PC-3 (cell line): ENCODE measurements at regions of chr4 and their contacts with region 1.

Region 1: DNA sequence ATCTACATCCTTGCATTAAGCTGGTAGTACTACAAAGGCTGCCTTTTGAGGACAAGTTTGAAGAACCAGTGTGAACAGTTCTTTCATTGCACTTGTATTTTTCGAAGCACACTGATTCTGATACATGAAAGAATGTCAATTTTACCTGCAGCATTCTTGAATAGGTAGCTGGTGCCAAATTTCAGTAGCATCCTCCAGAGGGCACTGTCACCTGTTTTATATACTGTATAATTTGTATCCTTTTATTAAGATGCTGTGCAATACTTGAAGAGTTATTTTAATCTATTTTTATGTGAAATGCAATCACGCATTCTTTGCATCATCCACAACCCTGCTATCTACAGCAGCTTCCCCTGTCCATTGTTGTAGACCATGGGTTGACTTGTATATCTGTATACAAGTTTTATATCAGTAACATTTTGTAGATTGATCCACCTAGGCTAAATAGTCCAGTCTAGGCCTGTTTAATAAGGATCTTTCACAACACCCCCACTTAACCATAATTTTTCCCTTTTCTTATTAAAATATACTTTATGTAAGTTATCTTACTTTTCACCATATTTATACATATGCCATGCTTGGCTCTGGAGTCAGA is 325.7 kb downstream of the PCDH7 start:
- DNase-seq: peak; percentile 65
- ATAC-seq: peak; percentile 67
- H3K4me3 ChIP-seq: no peak overlapping the region
- H3K27ac ChIP-seq: no peak overlapping the region
- H3K4me1 ChIP-seq: peaks cover 8% of the 10 kb centered on the region; the same call in 1 of the 2 replicates
- H3K27me3 ChIP-seq: no peaks in the 10 kb centered on the region
- CTCF ChIP-seq: peak; percentile 72

Region 2: GRCh38 chr4:30396772-30397475 is 648.9 kb before region 1 on chr4:
- CTCF ChIA-PET with region 1: no interaction called
- POLR2A ChIA-PET with region 1: no interaction called
- intact Hi-C with region 1: no loop called
- DNase-seq: peak; percentile 41
- ATAC-seq: peak; percentile 18; the same call in 1 of the 2 replicates
- H3K4me3 ChIP-seq: no peak overlapping the region
- H3K27ac ChIP-seq: no peak overlapping the region
- H3K4me1 ChIP-seq: peaks cover 11% of the 10 kb centered on the region; the same call in 1 of the 2 replicates
- H3K27me3 ChIP-seq: no peaks in the 10 kb centered on the region
- CTCF ChIP-seq: no peak

Region 3: DNA sequence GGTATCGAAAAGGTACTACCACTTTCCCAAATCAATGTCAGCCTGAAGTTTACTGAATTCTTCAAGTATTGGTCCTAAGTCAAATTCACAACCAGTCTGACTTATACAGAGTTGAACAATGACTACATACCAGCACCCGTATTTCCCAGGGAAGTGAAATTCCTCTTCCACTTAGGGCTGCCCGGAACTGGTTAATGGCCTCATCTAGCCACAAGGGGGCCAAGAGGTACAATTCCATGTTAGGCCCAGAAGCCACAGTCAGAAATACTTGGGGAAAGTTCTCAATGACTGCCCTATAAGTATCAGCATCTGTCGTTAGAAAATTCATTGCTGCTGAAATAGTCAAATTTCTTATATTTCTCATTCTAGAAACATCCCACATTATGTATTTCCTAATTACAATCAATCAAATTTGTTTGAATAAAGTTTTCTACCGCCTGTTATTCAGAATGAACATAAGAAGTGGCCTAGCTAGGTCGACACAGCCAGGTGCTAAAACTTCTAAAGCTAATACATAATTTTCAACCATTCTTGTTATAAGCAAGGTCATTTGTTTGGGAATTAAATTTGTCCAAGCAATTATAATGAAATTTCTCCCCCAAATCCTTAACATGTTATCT is 331.3 kb before region 1 on chr4:
- CTCF ChIA-PET with region 1: no interaction called
- POLR2A ChIA-PET with region 1: no interaction called
- intact Hi-C with region 1: loop called (anchors 2 kb)
- DNase-seq: peak; percentile 65
- ATAC-seq: no peak
- H3K4me3 ChIP-seq: no peak overlapping the region
- H3K27ac ChIP-seq: no peak overlapping the region
- H3K4me1 ChIP-seq: peaks cover 5% of the 10 kb centered on the region; the same call in 1 of the 2 replicates
- H3K27me3 ChIP-seq: no peaks in the 10 kb centered on the region
- CTCF ChIP-seq: peak; percentile 76

Region 4: GRCh38 chr4:31078661-31079060 is 32.8 kb after region 1 on chr4:
- CTCF ChIA-PET with region 1: no interaction called
- POLR2A ChIA-PET with region 1: no interaction called
- intact Hi-C with region 1: no loop called
- DNase-seq: no peak
- ATAC-seq: no peak
- H3K4me3 ChIP-seq: no peak overlapping the region
- H3K27ac ChIP-seq: no peak overlapping the region
- H3K4me1 ChIP-seq: peaks cover 4% of the 10 kb centered on the region; the same call in 1 of the 2 replicates
- H3K27me3 ChIP-seq: no peaks in the 10 kb centered on the region
- CTCF ChIP-seq: no peak

Region 5: GRCh38 chr4:31089815-31090214 is 44.0 kb after region 1 on chr4:
- CTCF ChIA-PET with region 1: no interaction called
- POLR2A ChIA-PET with region 1: no interaction called
- intact Hi-C with region 1: loop called (anchors 2 kb)
- DNase-seq: peak; percentile 94
- ATAC-seq: peak; percentile 84
- H3K4me3 ChIP-seq: peak overlapping the region; percentile 45; the same call in 1 of the 2 replicates
- H3K27ac ChIP-seq: peak overlapping the region; percentile 89
- H3K4me1 ChIP-seq: peaks cover 33% of the 10 kb centered on the region
- H3K27me3 ChIP-seq: no peaks in the 10 kb centered on the region
- CTCF ChIP-seq: no peak

Region 6: GRCh38 chr4:31169851-31170250 is 124.0 kb after region 1 on chr4:
- CTCF ChIA-PET with region 1: no interaction called
- POLR2A ChIA-PET with region 1: no interaction called
- intact Hi-C with region 1: no loop called
- DNase-seq: peak; percentile 2
- ATAC-seq: no peak
- H3K4me3 ChIP-seq: no peak overlapping the region
- H3K27ac ChIP-seq: no peak overlapping the region
- H3K4me1 ChIP-seq: no peaks in the 10 kb centered on the region
- H3K27me3 ChIP-seq: no peaks in the 10 kb centered on the region
- CTCF ChIP-seq: no peak

Region 7: GRCh38 chr4:31370866-31371465 is 325.1 kb after region 1 on chr4:
- CTCF ChIA-PET with region 1: no interaction called
- POLR2A ChIA-PET with region 1: no interaction called
- intact Hi-C with region 1: loop called (anchors 5 kb)
- DNase-seq: peak; percentile 75
- ATAC-seq: 0 out of 2 replicates have a peak, but pooled peaks have one; percentile 37
- H3K4me3 ChIP-seq: no peak overlapping the region
- H3K27ac ChIP-seq: no peak overlapping the region
- H3K4me1 ChIP-seq: peaks cover 6% of the 10 kb centered on the region; the same call in 1 of the 2 replicates
- H3K27me3 ChIP-seq: no peaks in the 10 kb centered on the region
- CTCF ChIP-seq: peak; percentile 77

Region 8: GRCh38 chr4:31674313-31674947 is 628.6 kb after region 1 on chr4:
- CTCF ChIA-PET with region 1: interaction called, 6 read pairs
- POLR2A ChIA-PET with region 1: no interaction called
- intact Hi-C with region 1: loop called (anchors 10 kb)
- DNase-seq: peak; percentile 54
- ATAC-seq: peak; percentile 54; the same call in 1 of the 2 replicates
- H3K4me3 ChIP-seq: no peak overlapping the region
- H3K27ac ChIP-seq: no peak overlapping the region
- H3K4me1 ChIP-seq: no peaks in the 10 kb centered on the region
- H3K27me3 ChIP-seq: no peaks in the 10 kb centered on the region
- CTCF ChIP-seq: peak; percentile 53